IMR-90 (cell line): ENCODE measurements at regions of chr2 and their contacts with region 1.

Region 1: DNA sequence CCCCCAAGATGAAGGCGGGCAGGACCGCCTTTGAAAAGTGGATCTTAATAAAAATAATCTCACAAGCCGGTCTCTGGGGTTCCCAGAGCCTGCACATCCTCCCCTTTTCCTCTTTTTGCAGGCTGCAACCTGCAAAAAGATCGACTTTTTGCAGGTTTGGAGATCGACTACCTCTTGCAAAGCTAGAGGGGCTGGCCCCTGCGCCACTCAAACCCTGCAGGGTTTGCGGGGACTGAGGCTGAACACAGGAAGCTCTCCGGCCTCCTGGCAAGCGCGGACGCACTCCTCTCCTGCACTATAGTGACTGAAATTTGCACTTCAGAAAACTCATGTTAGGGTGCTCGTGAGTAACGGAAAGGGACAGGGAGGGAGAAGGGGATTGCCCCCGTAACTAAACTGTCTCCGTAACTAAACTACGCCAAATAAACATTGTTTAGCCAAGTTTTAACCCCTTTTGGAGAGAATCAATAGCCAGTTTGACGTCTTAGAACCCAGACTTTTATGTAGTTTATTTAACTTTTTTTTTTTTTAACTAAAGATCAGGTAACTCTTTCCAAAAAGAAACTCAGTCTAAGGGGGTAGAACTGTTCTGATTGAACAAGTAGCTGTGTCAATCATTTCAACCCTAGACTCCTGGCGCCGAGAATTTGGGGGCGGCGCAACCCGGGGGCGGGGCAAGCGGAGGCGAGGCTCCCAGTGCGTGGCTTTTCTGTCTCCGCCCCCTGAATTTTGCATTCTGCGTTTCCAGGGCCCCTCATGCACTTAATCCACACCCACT is 2.5 kb downstream of the IGFBP5 start:
- DNase-seq: peak; percentile 81
- ATAC-seq: peak; percentile 14
- H3K4me3 ChIP-seq: peak overlapping the region; percentile 69
- H3K27ac ChIP-seq: peak overlapping the region; percentile 85
- H3K4me1 ChIP-seq: peaks cover 16% of the 10 kb centered on the region
- H3K27me3 ChIP-seq: no peaks in the 10 kb centered on the region
- CTCF ChIP-seq: no peak
- POLR2A ChIP-seq: peak; percentile 12; the same call in 1 of the 2 replicates
- RAD21 ChIP-seq: no peak

Region 2: GRCh38 chr2:215269397-215270119 is 1423.3 kb before region 1 on chr2:
- CTCF ChIA-PET with region 1: no interaction called
- POLR2A ChIA-PET with region 1: no interaction called
- dilution Hi-C with region 1: no loop called
- in situ Hi-C with region 1: no loop called
- intact Hi-C with region 1: no loop called
- DNase-seq: peak; percentile 80
- ATAC-seq: peak; percentile 85
- H3K4me3 ChIP-seq: no peak overlapping the region
- H3K27ac ChIP-seq: no peak overlapping the region
- H3K4me1 ChIP-seq: no peaks in the 10 kb centered on the region
- H3K27me3 ChIP-seq: no peaks in the 10 kb centered on the region
- CTCF ChIP-seq: peak; percentile 78
- POLR2A ChIP-seq: no peak
- RAD21 ChIP-seq: peak; percentile 70

Region 3: GRCh38 chr2:217064234-217065024 is 371.6 kb after region 1 on chr2:
- CTCF ChIA-PET with region 1: no interaction called
- POLR2A ChIA-PET with region 1: interaction called, 3 read pairs
- dilution Hi-C with region 1: no loop called
- in situ Hi-C with region 1: loop called (anchors 10 kb)
- intact Hi-C with region 1: loop called (anchors 1 kb)
- DNase-seq: no peak
- ATAC-seq: no peak
- H3K4me3 ChIP-seq: no peak overlapping the region
- H3K27ac ChIP-seq: peak overlapping the region; percentile 62
- H3K4me1 ChIP-seq: peaks cover 14% of the 10 kb centered on the region
- H3K27me3 ChIP-seq: no peaks in the 10 kb centered on the region
- CTCF ChIP-seq: no peak
- POLR2A ChIP-seq: no peak
- RAD21 ChIP-seq: no peak

Region 4: DNA sequence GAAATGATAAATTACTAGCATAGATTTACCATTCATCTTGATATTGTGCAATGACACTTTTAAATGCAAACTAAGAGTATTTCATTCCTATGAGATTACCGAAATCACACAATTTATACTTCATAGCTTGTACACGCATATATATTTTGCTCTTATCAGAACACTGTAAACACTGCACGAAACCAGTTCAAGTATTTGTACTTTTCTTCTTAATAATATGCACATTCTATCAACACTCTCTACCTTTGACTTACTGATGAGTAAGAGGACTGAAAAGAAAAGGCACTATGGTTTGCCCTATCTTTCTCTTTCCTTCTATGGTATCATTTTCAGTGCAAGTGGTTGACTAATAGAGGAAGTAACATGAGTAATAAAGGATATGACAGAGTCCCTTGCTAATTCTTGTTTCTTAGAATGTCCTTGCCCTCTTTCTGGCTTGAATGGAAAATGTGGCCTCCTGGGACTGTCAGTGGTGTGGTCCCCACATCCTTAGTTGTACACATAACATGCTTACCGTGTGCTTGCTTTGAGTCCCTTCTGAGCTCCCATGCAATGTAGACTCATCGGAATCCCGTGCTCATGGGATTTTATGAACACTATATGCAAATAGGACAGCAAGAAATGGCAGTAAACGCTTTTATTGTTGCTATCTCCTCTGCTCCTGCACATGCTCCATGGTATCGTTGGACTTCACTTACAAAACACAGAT is 530.6 kb after region 1 on chr2:
- CTCF ChIA-PET with region 1: interaction called, 5 read pairs
- POLR2A ChIA-PET with region 1: interaction called, 6 read pairs
- dilution Hi-C with region 1: no loop called
- in situ Hi-C with region 1: no loop called
- intact Hi-C with region 1: loop called (anchors 1 kb)
- DNase-seq: peak; percentile 99
- ATAC-seq: peak; percentile 85
- H3K4me3 ChIP-seq: no peak overlapping the region
- H3K27ac ChIP-seq: peak overlapping the region; percentile 99
- H3K4me1 ChIP-seq: peaks cover 35% of the 10 kb centered on the region
- H3K27me3 ChIP-seq: no peaks in the 10 kb centered on the region
- CTCF ChIP-seq: no peak
- POLR2A ChIP-seq: no peak
- RAD21 ChIP-seq: peak; percentile 28

Region 5: DNA sequence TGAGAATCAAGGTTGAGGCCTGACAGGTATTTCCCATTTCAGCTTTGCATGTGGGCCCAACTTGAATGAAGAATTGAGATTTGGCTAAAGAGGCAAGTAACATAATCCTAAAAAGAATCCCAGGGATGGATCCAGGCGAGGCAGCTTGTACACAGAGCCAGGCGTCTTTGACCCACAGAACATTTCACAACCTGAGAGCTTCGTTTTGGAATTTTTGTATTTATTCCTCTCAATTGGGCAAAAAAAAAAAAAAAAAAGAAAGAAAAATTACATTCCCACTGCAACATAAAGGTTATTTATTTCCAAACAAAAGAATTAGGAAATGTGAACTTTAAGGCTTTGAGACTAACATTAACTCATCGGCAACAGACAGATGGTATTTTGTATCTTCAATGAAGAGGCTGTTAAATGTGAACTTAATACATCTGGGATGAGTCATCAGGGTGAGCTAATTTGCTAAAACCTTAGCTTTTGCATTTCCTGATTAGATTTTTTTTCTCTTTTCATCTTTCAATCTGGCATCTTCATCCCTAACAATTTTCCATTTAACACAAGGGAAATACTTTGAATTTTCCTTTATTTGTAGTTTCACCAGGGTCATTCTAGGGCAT is 645.6 kb after region 1 on chr2:
- CTCF ChIA-PET with region 1: no interaction called
- POLR2A ChIA-PET with region 1: interaction called, 17 read pairs
- dilution Hi-C with region 1: no loop called
- in situ Hi-C with region 1: no loop called
- intact Hi-C with region 1: loop called (anchors 2 kb)
- DNase-seq: peak; percentile 96
- ATAC-seq: peak; percentile 73
- H3K4me3 ChIP-seq: no peak overlapping the region
- H3K27ac ChIP-seq: peak overlapping the region; percentile 100
- H3K4me1 ChIP-seq: peaks cover 12% of the 10 kb centered on the region
- H3K27me3 ChIP-seq: no peaks in the 10 kb centered on the region
- CTCF ChIP-seq: no peak
- POLR2A ChIP-seq: no peak
- RAD21 ChIP-seq: no peak

Region 6: DNA sequence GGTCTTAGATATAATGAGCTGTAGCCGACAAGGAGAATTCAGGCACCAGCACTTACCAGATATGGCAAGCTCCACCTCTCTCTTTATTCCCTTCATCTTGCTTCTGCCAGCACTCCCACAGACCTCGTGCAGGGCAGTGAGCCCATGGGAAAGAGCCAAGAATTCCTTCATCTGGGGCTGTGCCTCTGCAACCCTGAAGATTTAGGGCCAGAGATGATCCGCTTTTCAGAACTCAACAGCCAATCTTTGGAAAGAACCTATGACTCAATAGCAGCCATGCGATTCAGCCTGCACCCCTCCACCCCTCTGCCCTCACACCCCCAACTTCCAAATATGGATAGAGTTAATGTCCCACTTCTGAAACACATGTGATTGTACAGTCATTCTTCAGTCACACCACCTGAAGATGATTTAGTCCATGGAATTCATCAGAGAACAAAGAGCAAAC is 700.8 kb after region 1 on chr2:
- CTCF ChIA-PET with region 1: no interaction called
- POLR2A ChIA-PET with region 1: interaction called, 14 read pairs
- dilution Hi-C with region 1: no loop called
- in situ Hi-C with region 1: no loop called
- intact Hi-C with region 1: no loop called
- DNase-seq: peak; percentile 96
- ATAC-seq: peak; percentile 80
- H3K4me3 ChIP-seq: no peak overlapping the region
- H3K27ac ChIP-seq: peak overlapping the region; percentile 81
- H3K4me1 ChIP-seq: peaks cover 24% of the 10 kb centered on the region
- H3K27me3 ChIP-seq: no peaks in the 10 kb centered on the region
- CTCF ChIP-seq: no peak
- POLR2A ChIP-seq: no peak
- RAD21 ChIP-seq: no peak